ENCODE measurements at regions of chr1 and their contacts with region 1.

Region 1: GRCh38 chr1:113140588-113141446 is 67.8 kb downstream of the LRIG2 start:
- DNase-seq: peak; percentile 59
- ATAC-seq: peak; percentile 91

Region 2: GRCh38 chr1:113042285-113043143 is 98.3 kb before region 1 on chr1:
- intact Hi-C with region 1: no loop called
- DNase-seq: peak; percentile 74
- ATAC-seq: peak; percentile 94

Region 3: GRCh38 chr1:113677250-113678158 is 536.7 kb after region 1 on chr1:
- intact Hi-C with region 1: loop called (anchors 2 kb)
- DNase-seq: no peak
- ATAC-seq: peak; percentile 60

Measured in left ventricle myocardium superior (tissue), 1 donor.